ENCODE measurements at regions of chr7 and their contacts with region 1.

Region 1: GRCh38 chr7:150898475-150899011 is 46.2 kb downstream of the AOC1 start:
- DNase-seq: peak; percentile 74 to 81
- ATAC-seq: peak; percentile 48 to 87 (median 68)
- H3K4me3 ChIP-seq: no peak overlapping the region
- H3K27ac ChIP-seq: no peak overlapping the region
- H3K4me1 ChIP-seq: peaks cover 0 to 25% (median 9%) of the 10 kb centered on the region in 9 donors
- H3K27me3 ChIP-seq: peaks cover 0 to 53% (median 32%) of the 10 kb centered on the region in 7 donors
- CTCF ChIP-seq: peak; percentile 84 to 97 (median 95)

Region 2: DNA sequence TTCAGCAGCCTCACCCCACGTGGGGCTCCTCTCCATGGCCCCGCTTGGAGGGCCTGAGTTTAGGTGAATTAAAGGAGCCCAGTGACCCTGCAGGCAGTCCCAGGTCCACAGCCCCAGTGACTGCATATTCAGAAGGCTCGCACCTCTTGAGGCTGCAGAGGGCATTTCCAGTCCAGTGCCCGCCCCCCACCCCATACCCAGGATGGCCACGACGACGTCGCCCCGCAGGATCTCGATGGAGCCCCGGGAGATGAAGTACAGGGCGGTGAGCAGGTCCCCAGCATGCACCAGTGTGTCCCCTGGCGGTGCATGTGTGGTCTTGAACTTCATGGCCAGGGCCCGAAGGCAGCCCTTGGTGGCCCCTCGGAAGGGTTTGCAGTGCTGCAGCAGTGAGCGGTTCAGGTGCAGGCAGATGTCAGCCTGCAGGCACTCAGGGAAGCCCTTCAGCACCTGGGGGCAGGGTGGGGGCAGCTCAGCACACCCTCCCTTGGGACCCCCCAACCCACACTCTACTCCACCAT is 51.5 kb after region 1 on chr7:
- intact Hi-C with region 1: loop called in 4 of 10 experiments (anchors 5 to 10 kb)
- DNase-seq: no peak
- ATAC-seq: no peak
- H3K4me3 ChIP-seq: no peak overlapping the region
- H3K27ac ChIP-seq: no peak overlapping the region
- H3K4me1 ChIP-seq: peaks cover 6 to 55% (median 20%) of the 10 kb centered on the region in 9 donors
- H3K27me3 ChIP-seq: peaks cover 0 to 34% (median 22%) of the 10 kb centered on the region in 7 donors
- CTCF ChIP-seq: no peak

Region 3: GRCh38 chr7:151017953-151018420 is 119.4 kb after region 1 on chr7:
- intact Hi-C with region 1: loop called in 1 of 10 experiments (anchors 10 kb)
- DNase-seq: peak; percentile 67 to 77
- ATAC-seq: peak; percentile 55 to 80 (median 69)
- H3K4me3 ChIP-seq: peak overlapping the region in 7 of 10 donors; percentile 9 to 37 (median 22)
- H3K27ac ChIP-seq: no peak overlapping the region
- H3K4me1 ChIP-seq: peaks cover 9 to 49% (median 31%) of the 10 kb centered on the region in 9 donors
- H3K27me3 ChIP-seq: peaks cover 0 to 56% (median 53%) of the 10 kb centered on the region in 7 donors
- CTCF ChIP-seq: peak; percentile 85 to 97 (median 95)